Naive thymus-derived CD8-positive, alpha-beta T cell (primary cell): ENCODE measurements at regions of chr1 and their contacts with region 1.

Region 1: GRCh38 chr1:24930204-24931145 is at the start of gene RUNX3:
- DNase-seq: peak; percentile 86 to 96 (median 94)
- ATAC-seq: peak; percentile 82 to 83
- H3K4me3 Mint-ChIP-seq: peak within 1 kb of the TSS; percentile 89 to 99 (median 98)
- H3K27ac Mint-ChIP-seq: peak within 1 kb of the TSS; percentile 88 to 100 (median 98)
- H3K4me1 Mint-ChIP-seq: peaks cover 29 to 69% (median 64%) of the 10 kb centered on the region in 4 donors
- H3K27me3 Mint-ChIP-seq: no peaks in the 10 kb centered on the region
- polyA plus RNA-seq, gene RUNX3: 22.0 to 64.0 (median 54.0) TPM

Region 2: DNA sequence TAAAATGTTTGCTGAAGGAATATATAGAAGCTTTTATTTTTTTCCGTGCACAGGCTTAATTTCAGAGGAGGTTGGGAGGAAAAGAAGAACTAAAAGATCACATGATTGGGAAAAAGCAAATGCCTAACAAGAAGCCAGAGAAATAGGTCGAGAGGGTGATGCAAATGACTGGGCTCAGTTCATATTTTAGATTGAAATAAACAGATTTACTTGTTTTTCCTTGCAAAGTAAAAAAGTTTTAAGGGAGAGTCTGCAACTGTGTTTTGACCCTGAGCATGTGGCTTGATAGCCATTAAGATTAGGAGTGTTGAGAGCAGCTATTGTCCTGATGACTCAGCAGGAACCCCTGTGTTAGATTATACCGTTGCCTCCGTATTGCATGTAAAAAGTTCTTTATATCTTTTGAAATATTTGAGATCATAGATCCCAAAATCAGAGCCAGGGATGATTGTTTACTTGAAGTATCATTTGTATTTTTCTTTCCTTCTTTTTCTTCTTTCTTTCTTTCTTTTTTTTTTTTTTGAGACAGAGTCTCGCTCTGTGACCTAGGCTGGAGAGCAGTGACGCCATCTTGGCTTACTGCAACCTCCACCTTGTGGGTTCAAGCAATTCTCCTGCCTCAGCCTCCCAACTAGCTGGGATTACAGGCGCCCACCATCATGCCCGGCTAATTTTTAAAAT is 165.0 kb before region 1 on chr1:
- POLR2A ChIA-PET with region 1: no interaction called
- DNase-seq: no peak
- ATAC-seq: no peak
- H3K4me3 Mint-ChIP-seq: no peak overlapping the region
- H3K27ac Mint-ChIP-seq: no peak overlapping the region
- H3K4me1 Mint-ChIP-seq: peaks cover 0 to 17% (median 0%) of the 10 kb centered on the region in 4 donors
- H3K27me3 Mint-ChIP-seq: no peaks in the 10 kb centered on the region

Region 3: GRCh38 chr1:24897767-24898483 is 32.5 kb before region 1 on chr1:
- POLR2A ChIA-PET with region 1: interaction called, 11 read pairs
- DNase-seq: peak in 5 of 10 donors; percentile 37 to 50 (median 39)
- ATAC-seq: peak; percentile 67 to 68
- H3K4me3 Mint-ChIP-seq: peak overlapping the region in 5 of 10 donors; percentile 24 to 59 (median 43)
- H3K27ac Mint-ChIP-seq: peak overlapping the region; percentile 60 to 94 (median 83)
- H3K4me1 Mint-ChIP-seq: peaks cover 20 to 52% (median 49%) of the 10 kb centered on the region in 4 donors
- H3K27me3 Mint-ChIP-seq: no peaks in the 10 kb centered on the region

Region 4: GRCh38 chr1:24941564-24941963 is 11.1 kb after region 1 on chr1:
- POLR2A ChIA-PET with region 1: interaction called, 10 read pairs
- DNase-seq: no peak
- ATAC-seq: peak in 1 of 2 donors; percentile 29
- H3K4me3 Mint-ChIP-seq: no peak overlapping the region
- H3K27ac Mint-ChIP-seq: peak overlapping the region in 7 of 10 donors; percentile 28 to 82 (median 62)
- H3K4me1 Mint-ChIP-seq: peaks cover 13 to 72% (median 43%) of the 10 kb centered on the region in 4 donors
- H3K27me3 Mint-ChIP-seq: no peaks in the 10 kb centered on the region

Region 5: GRCh38 chr1:24970399-24970753 is 39.9 kb after region 1 on chr1:
- POLR2A ChIA-PET with region 1: interaction called, 95 read pairs
- DNase-seq: no peak
- ATAC-seq: no peak
- H3K4me3 Mint-ChIP-seq: peak overlapping the region; percentile 44 to 88 (median 72)
- H3K27ac Mint-ChIP-seq: peak overlapping the region; percentile 81 to 97 (median 89)
- H3K4me1 Mint-ChIP-seq: peaks cover 38 to 79% (median 69%) of the 10 kb centered on the region in 4 donors
- H3K27me3 Mint-ChIP-seq: no peaks in the 10 kb centered on the region

Region 6: GRCh38 chr1:25037174-25038074 is 106.9 kb after region 1 on chr1:
- POLR2A ChIA-PET with region 1: interaction called, 105 read pairs
- DNase-seq: peak; percentile 37 to 81 (median 56)
- ATAC-seq: peak; percentile 45 to 54
- H3K4me3 Mint-ChIP-seq: peak overlapping the region in 7 of 10 donors; percentile 1 to 29 (median 14)
- H3K27ac Mint-ChIP-seq: peak overlapping the region in 8 of 10 donors; percentile 12 to 90 (median 50)
- H3K4me1 Mint-ChIP-seq: peaks cover 32 to 42% (median 36%) of the 10 kb centered on the region in 4 donors
- H3K27me3 Mint-ChIP-seq: no peaks in the 10 kb centered on the region